Cardiac septum (tissue), 1 donor: ENCODE measurements at regions of chr11 and their contacts with region 1.

Region 1: DNA sequence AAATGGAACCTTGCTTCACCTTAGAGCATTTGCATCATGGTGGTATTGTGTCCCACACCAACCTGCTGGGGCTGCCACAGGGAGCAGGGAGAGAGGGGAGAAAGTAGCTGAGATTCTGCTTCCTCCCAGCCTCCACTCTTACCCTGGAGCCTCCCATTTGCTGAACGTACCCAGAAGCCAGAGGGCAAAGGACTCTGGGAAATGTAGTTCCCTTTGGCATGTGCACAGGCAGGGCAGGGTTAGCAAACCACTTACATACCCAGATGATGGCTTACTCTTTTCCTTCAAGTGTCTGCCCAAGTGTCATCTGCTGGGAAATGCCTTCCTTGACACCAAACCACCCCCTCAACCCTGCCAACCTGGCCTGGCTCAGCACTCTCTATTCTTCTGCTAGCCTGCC is 16.9 kb downstream of the SMIM38 start:
- DNase-seq: no peak

Region 2: GRCh38 chr11:69157156-69157821 is 15.4 kb before region 1 on chr11:
- intact Hi-C with region 1: loop called (anchors 1 kb)
- DNase-seq: no peak